IMR-90 (cell line): ENCODE measurements at regions of chr10 and their contacts with region 1.

Region 1: GRCh38 chr10:42552493-42553407 is 85.6 kb downstream of the ZNF33B start:
- DNase-seq: peak; percentile 97
- ATAC-seq: peak; percentile 96
- H3K4me3 ChIP-seq: peak overlapping the region; percentile 74
- H3K27ac ChIP-seq: peak overlapping the region; percentile 34; the same call in 1 of the 2 replicates
- H3K4me1 ChIP-seq: peaks cover 5% of the 10 kb centered on the region; the same call in 1 of the 2 replicates
- H3K27me3 ChIP-seq: no peaks in the 10 kb centered on the region
- CTCF ChIP-seq: no peak
- POLR2A ChIP-seq: no peak
- RAD21 ChIP-seq: no peak

Region 2: DNA sequence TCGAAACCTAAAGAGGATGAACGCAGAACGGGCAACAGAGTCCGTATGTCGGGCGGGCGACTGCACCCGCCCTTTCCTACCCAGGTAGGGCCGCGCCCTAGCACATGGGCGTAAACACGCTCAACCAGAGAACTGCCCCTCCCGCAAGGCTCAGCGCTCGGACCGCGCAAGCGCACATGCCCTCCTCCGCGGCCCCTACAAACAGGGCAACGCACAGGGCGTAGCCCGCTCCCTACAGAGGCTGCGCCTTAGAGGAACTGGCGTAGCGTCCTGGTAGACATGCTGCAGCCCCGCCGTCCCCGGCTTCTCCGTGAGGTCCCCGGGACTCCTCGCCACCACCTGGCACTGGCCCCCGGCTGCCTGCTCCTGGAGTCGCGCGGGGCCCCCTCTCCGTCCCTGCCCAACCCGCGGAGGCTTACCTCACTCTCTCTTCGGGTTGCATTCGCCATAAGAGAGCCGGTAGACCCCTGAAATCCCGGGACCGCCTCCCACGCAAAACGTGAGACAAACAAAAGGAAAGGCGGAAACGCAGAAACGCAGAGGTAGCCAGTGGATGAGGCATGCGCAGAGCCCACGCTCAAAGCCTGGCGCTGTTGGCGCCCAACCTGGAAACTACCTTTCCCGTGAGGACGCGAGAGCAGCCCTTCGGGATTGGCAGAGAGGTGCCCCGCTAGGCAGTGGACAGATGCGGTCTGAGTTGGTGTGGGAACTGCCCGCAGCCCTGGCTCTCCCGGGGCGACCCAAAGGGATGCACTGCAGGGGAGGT is 85.5 kb after region 1 on chr10 and contains the start of gene ZNF33B:
- CTCF ChIA-PET with region 1: no interaction called
- POLR2A ChIA-PET with region 1: no interaction called
- dilution Hi-C with region 1: no loop called
- in situ Hi-C with region 1: no loop called
- intact Hi-C with region 1: loop called (anchors 2 kb)
- DNase-seq: peak; percentile 89
- ATAC-seq: peak; percentile 99
- H3K4me3 ChIP-seq: peak within 1 kb of the TSS; percentile 92
- H3K27ac ChIP-seq: peak within 1 kb of the TSS; percentile 79
- H3K4me1 ChIP-seq: peaks cover 1% of the 10 kb centered on the region; the same call in 1 of the 2 replicates
- H3K27me3 ChIP-seq: no peaks in the 10 kb centered on the region
- CTCF ChIP-seq: no peak
- POLR2A ChIP-seq: peak; percentile 71; the same call in 1 of the 2 replicates
- RAD21 ChIP-seq: no peak
- total RNA-seq, gene ZNF33B: 4.5 and 5.0 TPM in 2 replicates